Left lung (tissue), 14 donors: ENCODE measurements at regions of chr9 and their contacts with region 1.

Region 1: DNA sequence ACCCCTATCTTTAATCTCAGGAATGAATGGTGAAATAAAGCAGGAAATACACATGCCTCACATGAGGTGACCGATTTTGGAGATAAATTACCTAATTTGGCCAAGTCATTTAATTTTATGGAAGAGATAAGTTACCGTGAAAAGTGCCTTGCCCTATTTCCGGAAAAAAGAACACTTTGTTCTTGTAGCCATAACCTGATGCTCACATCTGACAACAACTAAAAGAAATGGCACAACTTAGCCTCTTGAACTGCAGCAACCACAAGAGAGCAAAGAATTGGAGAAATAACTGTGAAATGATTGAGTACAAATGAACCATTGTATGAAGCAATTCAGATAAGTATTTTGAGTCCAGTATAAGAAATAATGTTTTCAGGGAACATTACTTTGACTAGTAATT is 628.1 kb upstream of the TYRP1 start:
- DNase-seq: no peak
- ATAC-seq: no peak
- H3K4me3 ChIP-seq: no peak overlapping the region
- H3K27ac ChIP-seq: no peak overlapping the region
- H3K4me1 ChIP-seq: no peaks in the 10 kb centered on the region
- H3K27me3 ChIP-seq: no peaks in the 10 kb centered on the region
- CTCF ChIP-seq: no peak

Region 2: GRCh38 chr9:11743356-11743755 is 321.7 kb before region 1 on chr9:
- intact Hi-C with region 1: no loop called
- DNase-seq: no peak
- ATAC-seq: no peak
- H3K4me3 ChIP-seq: no peak overlapping the region
- H3K27ac ChIP-seq: no peak overlapping the region
- H3K4me1 ChIP-seq: no peaks in the 10 kb centered on the region
- H3K27me3 ChIP-seq: no peaks in the 10 kb centered on the region
- CTCF ChIP-seq: no peak

Region 3: DNA sequence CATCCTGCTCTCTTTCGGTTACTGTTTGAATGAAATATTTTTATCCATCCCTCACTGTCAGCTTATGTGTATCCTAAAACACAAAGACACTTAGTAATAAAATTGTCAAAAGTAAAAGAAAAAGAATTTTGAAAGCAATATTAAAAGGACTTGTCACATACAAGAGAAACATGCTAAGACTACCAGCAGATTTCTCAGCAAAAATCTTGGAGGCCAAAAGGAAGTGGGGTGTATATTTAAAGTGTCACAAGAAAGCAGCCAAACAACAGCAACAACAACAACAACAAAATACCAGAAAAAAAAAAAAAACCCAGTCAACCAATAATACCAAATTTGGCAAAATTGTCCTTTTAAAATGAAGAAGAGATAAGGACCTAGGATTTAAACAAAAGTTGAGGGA is 50.6 kb before region 1 on chr9:
- intact Hi-C with region 1: loop called in 1 of 2 experiments (anchors 10 kb)
- DNase-seq: no peak
- ATAC-seq: no peak
- H3K4me3 ChIP-seq: no peak overlapping the region
- H3K27ac ChIP-seq: no peak overlapping the region
- H3K4me1 ChIP-seq: no peaks in the 10 kb centered on the region
- H3K27me3 ChIP-seq: no peaks in the 10 kb centered on the region
- CTCF ChIP-seq: no peak